Mucosa of descending colon (tissue), 3 donors: ENCODE measurements at regions of chr1 and their contacts with region 1.

Region 1: DNA sequence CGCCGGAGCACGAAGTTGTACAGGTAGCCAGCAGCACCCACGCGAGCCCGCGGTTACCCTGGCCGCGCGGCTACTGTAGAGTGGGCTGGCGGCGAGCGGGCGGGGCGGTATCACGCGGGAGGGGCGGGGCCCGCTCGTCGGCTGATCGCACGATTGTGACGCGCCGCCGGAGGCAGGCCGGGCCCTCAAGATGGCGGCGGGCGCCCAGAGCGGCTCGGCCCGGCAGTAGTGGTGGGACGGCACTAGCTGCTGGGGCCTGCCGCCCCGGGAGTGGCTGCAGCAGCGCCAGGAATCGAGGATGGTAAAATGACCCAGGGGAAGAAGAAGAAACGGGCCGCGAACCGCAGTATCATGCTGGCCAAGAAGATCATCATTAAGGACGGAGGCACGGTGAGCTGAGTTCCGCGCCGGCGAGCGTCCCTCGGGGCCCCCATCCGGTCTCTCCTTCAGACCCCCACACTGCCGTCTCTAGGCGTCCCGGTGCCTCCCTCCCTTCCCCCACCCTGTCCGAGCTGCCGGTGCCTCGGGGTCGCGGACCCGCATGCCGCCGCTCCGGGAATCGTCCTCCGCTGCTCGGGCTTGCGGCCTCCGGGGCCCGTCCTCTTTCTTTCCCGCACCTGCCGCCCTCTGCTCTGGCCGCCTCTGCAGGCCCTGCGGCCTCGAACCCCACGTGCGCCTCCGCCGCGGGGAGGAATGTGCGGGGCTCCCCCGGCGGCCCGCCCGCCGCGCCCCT is 68.3 kb downstream of the SLC35A3 start:
- DNase-seq: peak; percentile 93 to 94 (median 94)
- ATAC-seq: peak; percentile 97
- H3K4me3 ChIP-seq: peak overlapping the region; percentile 86
- H3K4me1 ChIP-seq: peaks cover 14% of the 10 kb centered on the region
- CTCF ChIP-seq: no peak

Region 2: GRCh38 chr1:99969729-99970621 is 68.1 kb before region 1 on chr1 and contains the start of gene SLC35A3:
- intact Hi-C with region 1: loop called in 1 of 2 experiments (anchors 5 kb)
- DNase-seq: peak; percentile 85 to 91 (median 91)
- ATAC-seq: peak; percentile 91
- H3K4me3 ChIP-seq: peak within 1 kb of the TSS; percentile 85
- H3K4me1 ChIP-seq: peaks cover 45% of the 10 kb centered on the region
- CTCF ChIP-seq: no peak
- total RNA-seq, gene SLC35A3: 86.2 to 205 (median 159) TPM

Region 3: DNA sequence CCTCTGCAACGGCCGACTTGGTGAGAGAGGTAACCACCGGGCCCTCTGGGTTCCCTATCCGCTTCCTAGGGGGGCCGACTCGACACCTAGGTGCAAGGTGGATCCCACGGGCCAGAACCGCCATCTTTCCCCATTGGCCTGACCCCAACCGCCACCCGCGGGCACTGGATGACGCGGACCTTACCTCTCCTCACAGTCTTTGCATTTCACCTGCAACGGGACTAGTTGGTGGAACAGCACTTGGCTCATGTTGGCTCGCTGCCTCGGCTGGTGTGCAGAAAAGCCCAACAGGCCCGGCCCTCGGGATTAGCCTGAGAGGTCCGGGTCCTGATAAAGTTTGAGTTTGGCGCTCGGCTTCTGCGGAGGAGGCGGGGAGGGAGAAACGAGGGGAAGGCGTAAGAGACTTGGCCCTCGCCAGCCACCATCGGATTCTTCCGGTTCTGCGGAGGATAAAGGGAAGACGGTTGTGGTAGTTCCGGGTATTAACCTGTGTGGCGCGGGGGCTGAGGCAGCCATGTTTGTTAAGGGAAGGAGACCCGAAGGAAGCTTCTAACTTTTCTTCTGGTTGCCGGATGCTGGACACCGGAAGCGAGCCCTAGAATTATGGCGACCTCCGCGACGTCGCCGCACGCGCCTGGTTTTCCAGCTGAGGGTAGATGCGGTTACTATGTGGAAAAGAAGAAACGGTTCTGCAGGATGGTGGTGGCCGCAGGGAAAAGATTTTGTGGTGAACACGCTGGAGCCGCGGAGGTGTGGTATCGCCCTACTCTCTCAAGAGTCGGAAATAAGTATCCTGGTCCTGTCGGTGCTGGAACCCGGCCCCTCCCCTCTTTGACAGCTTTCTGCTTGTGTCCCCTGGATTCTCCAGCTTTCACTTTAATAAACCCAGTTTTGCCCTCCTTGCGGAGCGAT is 94.7 kb after region 1 on chr1 and contains the starts of genes SASS6 and TRMT13:
- intact Hi-C with region 1: no loop called
- DNase-seq: peak; percentile 95 to 98 (median 97)
- ATAC-seq: peak; percentile 100
- H3K4me3 ChIP-seq: peak within 1 kb of the TSS; percentile 62
- H3K4me1 ChIP-seq: peaks cover 19% of the 10 kb centered on the region
- CTCF ChIP-seq: no peak
- total RNA-seq, gene SASS6: 2.3 to 4.8 (median 4.4) TPM
- total RNA-seq, gene TRMT13: 10.9 to 19.4 (median 14.4) TPM